ENCODE measurements at regions of chr20 and their contacts with region 1.

Region 1: DNA sequence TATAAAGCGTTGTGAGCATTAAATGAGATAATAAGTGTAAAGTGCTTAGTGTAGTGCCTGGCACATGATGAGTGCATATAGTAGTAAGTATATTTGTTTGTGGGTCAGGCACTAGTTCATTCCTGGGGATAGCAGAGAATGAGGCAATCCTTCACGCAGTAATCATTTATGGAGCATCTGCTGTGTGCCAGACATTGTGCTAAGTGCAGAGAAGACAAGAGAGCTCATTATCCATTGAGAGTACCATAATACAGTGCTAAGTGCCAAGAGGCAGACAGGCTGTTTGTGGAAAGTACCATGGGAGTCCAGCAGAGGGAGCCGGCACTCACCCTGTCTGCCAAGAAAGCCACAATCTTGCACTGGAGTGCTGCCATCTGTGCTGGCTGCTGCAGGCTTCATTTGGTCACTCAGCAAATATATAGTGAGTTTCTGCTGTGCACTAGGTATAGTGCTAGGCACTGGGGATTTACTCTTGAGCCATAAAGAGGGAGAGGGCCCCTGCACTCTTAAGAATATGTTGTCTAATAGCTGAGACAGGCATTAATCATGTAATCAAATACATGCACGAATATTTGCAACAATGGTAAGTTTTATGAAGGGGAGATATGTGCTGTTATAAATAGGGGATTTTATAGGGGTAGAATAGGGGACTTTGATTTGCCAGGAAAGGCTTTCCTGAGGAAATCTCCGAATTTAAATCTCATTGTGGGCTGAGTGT is 12.9 kb upstream of the MROH8 start:
- DNase-seq: peak; percentile 38
- H3K4me3 ChIP-seq: no peak overlapping the region
- CTCF ChIP-seq: peak; percentile 97

Region 2: GRCh38 chr20:36736451-36737182 is 455.7 kb before region 1 on chr20:
- CTCF ChIA-PET with region 1: no interaction called
- POLR2A ChIA-PET with region 1: no interaction called
- DNase-seq: no peak
- H3K4me3 ChIP-seq: no peak overlapping the region
- CTCF ChIP-seq: no peak

Region 3: DNA sequence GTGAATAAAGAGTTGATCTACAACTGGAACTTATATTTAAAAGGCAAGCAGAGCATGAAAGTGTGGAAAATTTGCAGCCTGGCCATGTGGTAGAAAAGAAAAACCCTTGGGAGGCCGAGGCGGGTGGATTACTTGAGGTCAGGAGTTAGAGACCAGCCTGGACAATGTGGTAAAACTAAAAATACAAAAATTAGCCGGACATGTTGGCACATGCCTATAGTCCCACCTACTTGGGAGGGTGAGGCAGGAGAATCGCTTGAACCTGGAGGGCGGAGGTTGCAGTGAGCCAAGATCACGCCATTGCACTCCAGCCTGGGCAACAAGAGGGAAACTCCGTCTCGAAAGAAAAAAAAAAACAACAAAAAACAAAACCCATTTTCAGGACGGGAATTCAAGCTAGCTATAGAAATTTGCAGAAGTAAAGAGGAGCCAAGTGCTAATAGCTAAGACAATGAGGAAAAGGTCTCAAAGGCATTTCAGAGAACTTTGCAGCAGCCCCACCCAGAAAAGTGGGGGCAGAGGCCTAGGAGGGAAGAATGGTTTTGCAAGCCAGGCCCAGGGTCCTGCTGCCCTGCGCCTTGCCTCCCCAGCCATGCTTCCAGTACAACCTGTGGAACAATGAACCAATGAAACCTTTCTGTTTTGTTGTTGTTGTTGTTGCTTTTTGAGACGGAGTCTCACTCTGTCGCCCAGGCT is 202.6 kb before region 1 on chr20:
- CTCF ChIA-PET with region 1: no interaction called
- POLR2A ChIA-PET with region 1: no interaction called
- DNase-seq: no peak
- H3K4me3 ChIP-seq: no peak overlapping the region
- CTCF ChIP-seq: no peak

Region 4: GRCh38 chr20:37178839-37179670 is 13.2 kb before region 1 on chr20 and contains the starts of genes MROH8 and RPN2:
- CTCF ChIA-PET with region 1: interaction called, 80 read pairs
- POLR2A ChIA-PET with region 1: interaction called, 6 read pairs
- DNase-seq: peak; percentile 85
- H3K4me3 ChIP-seq: peak within 1 kb of the TSS; percentile 90
- CTCF ChIP-seq: no peak

Region 5: GRCh38 chr20:37223053-37223452 is 30.8 kb after region 1 on chr20:
- CTCF ChIA-PET with region 1: interaction called, 26 read pairs
- POLR2A ChIA-PET with region 1: no interaction called
- DNase-seq: peak; percentile 80
- H3K4me3 ChIP-seq: no peak overlapping the region
- CTCF ChIP-seq: no peak

Region 6: GRCh38 chr20:37265152-37265551 is 72.9 kb after region 1 on chr20:
- CTCF ChIA-PET with region 1: interaction called, 10 read pairs
- POLR2A ChIA-PET with region 1: no interaction called
- DNase-seq: no peak
- H3K4me3 ChIP-seq: no peak overlapping the region
- CTCF ChIP-seq: no peak

Region 7: GRCh38 chr20:37527638-37528441 is 335.5 kb after region 1 on chr20 and contains the start of gene BLCAP:
- CTCF ChIA-PET with region 1: interaction called, 227 read pairs
- POLR2A ChIA-PET with region 1: no interaction called
- DNase-seq: no peak
- H3K4me3 ChIP-seq: peak within 1 kb of the TSS; percentile 96
- CTCF ChIP-seq: no peak

Region 8: DNA sequence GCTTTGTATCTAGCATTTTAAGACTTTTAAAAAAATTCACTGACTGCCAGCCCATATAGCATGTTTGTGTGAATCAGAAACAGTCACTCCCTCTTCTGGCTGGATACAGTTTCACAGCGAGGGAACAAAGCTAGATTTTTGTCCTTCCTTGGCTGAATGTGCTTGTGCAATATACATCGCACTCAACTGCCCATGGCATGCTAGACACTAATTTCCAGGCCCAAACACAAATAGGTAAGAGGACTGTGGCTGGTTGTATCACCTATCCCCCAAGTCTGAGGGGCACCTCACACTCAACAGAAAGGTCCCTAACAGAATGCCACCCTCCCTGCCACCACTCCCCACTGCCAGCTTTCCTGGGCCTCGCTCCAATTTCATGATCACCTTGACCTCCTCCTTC is 351.5 kb after region 1 on chr20:
- CTCF ChIA-PET with region 1: interaction called, 30 read pairs
- POLR2A ChIA-PET with region 1: no interaction called
- DNase-seq: no peak
- H3K4me3 ChIP-seq: no peak overlapping the region
- CTCF ChIP-seq: peak; percentile 53